Head of caudate nucleus (tissue), 42 donors: ENCODE measurements at regions of chr22 and their contacts with region 1.

Region 1: GRCh38 chr22:37983860-37984791 is at the start of gene SOX10:
- DNase-seq: peak; percentile 61 to 91 (median 82)

Region 2: GRCh38 chr22:38017272-38017920 is 33.3 kb after region 1 on chr22:
- intact Hi-C with region 1: loop called (anchors 2 kb)
- DNase-seq: peak; percentile 62 to 96 (median 88)